ENCODE measurements at regions of chr4 and their contacts with region 1.

Region 1: GRCh38 chr4:13484122-13484748 is at the start of gene RAB28:
- H3K4me3 Mint-ChIP-seq: peak within 1 kb of the TSS; percentile 77
- H3K27ac Mint-ChIP-seq: peak within 1 kb of the TSS; percentile 90
- H3K4me1 Mint-ChIP-seq: peaks cover 24% of the 10 kb centered on the region
- H3K27me3 Mint-ChIP-seq: peaks cover 24% of the 10 kb centered on the region

Region 2: GRCh38 chr4:13627606-13628301 is 143.5 kb after region 1 on chr4 and contains the start of gene BOD1L1:
- intact Hi-C with region 1: loop called (anchors 2 kb)
- H3K4me3 Mint-ChIP-seq: peak within 1 kb of the TSS; percentile 92
- H3K27ac Mint-ChIP-seq: peak within 1 kb of the TSS; percentile 98
- H3K4me1 Mint-ChIP-seq: peaks cover 36% of the 10 kb centered on the region
- H3K27me3 Mint-ChIP-seq: peaks cover 5% of the 10 kb centered on the region

Region 3: DNA sequence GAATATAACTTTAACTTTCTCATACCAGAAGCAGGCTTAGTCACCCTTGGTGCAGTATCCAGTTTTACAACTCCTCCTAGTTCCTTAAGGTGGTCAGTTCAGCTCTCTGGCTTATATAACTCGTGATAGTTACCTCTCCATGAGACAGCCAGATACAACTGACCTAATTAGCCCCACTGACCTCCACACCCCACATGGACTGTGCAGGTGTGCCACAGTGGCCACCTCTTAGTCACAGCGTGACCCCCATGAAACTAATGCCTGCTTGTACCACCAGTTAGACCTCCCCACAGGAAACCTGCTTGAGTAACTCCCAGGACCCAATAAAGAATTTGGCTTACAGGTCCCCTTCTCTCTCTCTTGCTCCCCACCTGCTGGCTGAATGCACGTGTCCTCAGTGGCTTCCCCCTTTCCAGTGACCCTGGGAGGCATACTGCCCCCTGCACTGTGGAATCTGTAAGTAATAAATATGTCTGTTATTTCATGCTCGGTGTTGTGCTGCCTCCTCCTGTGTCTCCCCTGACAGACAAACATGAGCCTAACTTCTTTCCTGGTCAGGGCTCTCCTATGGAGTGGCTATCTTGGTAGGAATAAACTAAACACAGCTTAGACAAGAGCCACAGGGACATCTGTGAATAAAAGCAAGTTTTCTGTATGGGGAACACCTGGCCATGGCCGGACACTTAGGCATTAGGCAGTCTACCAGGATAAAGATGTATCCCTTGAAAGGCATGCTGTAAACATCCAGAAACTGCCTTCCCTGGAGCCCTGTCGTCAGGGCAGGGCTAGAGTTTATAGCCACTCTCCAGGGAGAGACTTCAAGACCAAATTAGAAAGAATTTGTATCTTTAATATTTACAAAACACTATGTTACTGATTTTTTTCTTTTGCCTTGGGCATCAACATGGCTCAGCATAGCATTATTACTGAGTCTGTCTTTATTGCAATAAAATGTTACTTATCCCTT is 353.0 kb after region 1 on chr4:
- intact Hi-C with region 1: no loop called
- H3K4me3 Mint-ChIP-seq: no peak overlapping the region
- H3K27ac Mint-ChIP-seq: no peak overlapping the region
- H3K4me1 Mint-ChIP-seq: no peaks in the 10 kb centered on the region
- H3K27me3 Mint-ChIP-seq: no peaks in the 10 kb centered on the region